Gastrocnemius medialis (tissue), 4 donors: ENCODE measurements at regions of chr12 and their contacts with region 1.

Region 1: GRCh38 chr12:53675651-53676453 is at the start of gene ATP5MC2:
- DNase-seq: peak; percentile 98
- ATAC-seq: peak; percentile 89 to 93
- H3K4me3 ChIP-seq: peak within 1 kb of the TSS; percentile 81 to 84 (median 82)
- H3K27ac ChIP-seq: peak within 1 kb of the TSS; percentile 93 to 99 (median 96)
- H3K4me1 ChIP-seq: peaks cover 26 to 31% of the 10 kb centered on the region in 2 donors
- H3K27me3 ChIP-seq: no peaks in the 10 kb centered on the region
- CTCF ChIP-seq: peak; percentile 95 to 99 (median 99)
- POLR2A ChIP-seq: peak; percentile 59 to 72
- total RNA-seq, gene ATP5MC2: 428 to 714 (median 580) TPM

Region 2: DNA sequence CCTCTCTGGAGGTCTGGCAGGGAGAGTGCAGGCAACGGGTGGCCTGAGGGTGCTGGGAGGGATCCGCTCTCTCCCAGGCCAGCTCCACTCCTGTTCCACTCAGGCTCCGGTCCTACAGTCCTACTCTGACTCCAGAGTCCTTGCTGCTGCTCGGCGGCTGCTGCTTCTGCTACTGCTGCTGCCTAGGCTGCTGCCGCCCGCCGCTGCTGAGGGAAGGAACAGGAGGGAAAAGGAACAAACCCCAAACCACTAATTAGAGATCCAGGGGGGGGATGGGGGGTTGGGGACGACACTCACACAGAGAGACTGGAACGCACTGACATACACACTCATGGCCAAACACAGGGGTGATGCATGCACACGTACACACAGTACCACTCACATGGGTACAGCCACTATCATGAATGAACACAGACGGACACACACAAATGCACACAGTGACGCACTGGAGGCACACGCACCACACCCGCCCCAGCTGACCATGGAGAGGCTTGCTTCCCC is 339.6 kb before region 1 on chr12 and contains the start of gene SP7:
- in situ Hi-C with region 1: no loop called
- intact Hi-C with region 1: no loop called
- DNase-seq: no peak
- ATAC-seq: no peak
- H3K4me3 ChIP-seq: no peak within 1 kb of the TSS
- H3K27ac ChIP-seq: no peak within 1 kb of the TSS
- H3K4me1 ChIP-seq: no peaks in the 10 kb centered on the region
- H3K27me3 ChIP-seq: peaks cover 14 to 22% (median 15%) of the 10 kb centered on the region in 3 donors
- CTCF ChIP-seq: no peak
- POLR2A ChIP-seq: no peak
- total RNA-seq, gene SP7: not detected

Region 3: GRCh38 chr12:53441040-53441833 is 234.6 kb before region 1 on chr12 and contains the start of gene PRR13:
- in situ Hi-C with region 1: no loop called
- intact Hi-C with region 1: loop called (anchors 1 kb)
- DNase-seq: peak; percentile 99
- ATAC-seq: peak; percentile 94 to 98
- H3K4me3 ChIP-seq: peak within 1 kb of the TSS; percentile 68 to 80 (median 78)
- H3K27ac ChIP-seq: peak within 1 kb of the TSS; percentile 87 to 94 (median 91)
- H3K4me1 ChIP-seq: peaks cover 12 to 13% of the 10 kb centered on the region in 2 donors
- H3K27me3 ChIP-seq: no peaks in the 10 kb centered on the region
- CTCF ChIP-seq: no peak
- POLR2A ChIP-seq: peak; percentile 89 to 97
- total RNA-seq, gene PRR13: 40.3 to 90.4 (median 74.2) TPM

Region 4: GRCh38 chr12:53543539-53543938 is 132.3 kb before region 1 on chr12:
- in situ Hi-C with region 1: loop called (anchors 5 to 10 kb)
- intact Hi-C with region 1: loop called (anchors 1 kb)
- DNase-seq: peak; percentile 19 to 60
- ATAC-seq: peak; percentile 86 to 97
- H3K4me3 ChIP-seq: no peak overlapping the region
- H3K27ac ChIP-seq: peak overlapping the region; percentile 5 to 67 (median 34)
- H3K4me1 ChIP-seq: peaks cover 0 to 9% of the 10 kb centered on the region in 2 donors
- H3K27me3 ChIP-seq: no peaks in the 10 kb centered on the region
- CTCF ChIP-seq: peak; percentile 77 to 90 (median 79)
- POLR2A ChIP-seq: no peak

Region 5: GRCh38 chr12:53727310-53728041 is 51.6 kb after region 1 on chr12 and contains the start of gene CALCOCO1:
- in situ Hi-C with region 1: no loop called
- intact Hi-C with region 1: loop called (anchors 1 kb)
- DNase-seq: peak; percentile 98 to 99
- ATAC-seq: peak; percentile 96 to 97
- H3K4me3 ChIP-seq: peak within 1 kb of the TSS; percentile 69 to 93 (median 82)
- H3K27ac ChIP-seq: peak within 1 kb of the TSS; percentile 87 to 98 (median 93)
- H3K4me1 ChIP-seq: peaks cover 18% of the 10 kb centered on the region in 2 donors
- H3K27me3 ChIP-seq: no peaks in the 10 kb centered on the region
- CTCF ChIP-seq: no peak
- POLR2A ChIP-seq: peak; percentile 70 to 91
- total RNA-seq, gene CALCOCO1: 158 to 385 (median 239) TPM